ENCODE measurements at regions of chr7 and their contacts with region 1.

Region 1: GRCh38 chr7:134632937-134633540 is 13.6 kb upstream of the BPGM start:
- DNase-seq: peak; percentile 57 to 65 (median 62)
- H3K4me3 ChIP-seq: no peak overlapping the region
- H3K4me3 Mint-ChIP-seq: no peak overlapping the region
- H3K27ac ChIP-seq: no peak overlapping the region
- H3K27ac Mint-ChIP-seq: peak overlapping the region in 1 of 7 donors; percentile 19
- H3K4me1 ChIP-seq: peaks cover 17% of the 10 kb centered on the region
- H3K4me1 Mint-ChIP-seq: peaks cover 13 to 18% (median 16%) of the 10 kb centered on the region in 4 donors
- H3K27me3 ChIP-seq: no peaks in the 10 kb centered on the region
- H3K27me3 Mint-ChIP-seq: peaks cover 9 to 12% of the 10 kb centered on the region in 2 donors

Region 2: GRCh38 chr7:134669845-134670373 is 36.9 kb after region 1 on chr7:
- CTCF ChIA-PET with region 1: interaction called, 5 read pairs
- POLR2A ChIA-PET with region 1: no interaction called
- intact Hi-C with region 1: loop called (anchors 5 kb)
- DNase-seq: peak; percentile 84 to 94 (median 85)
- H3K4me3 ChIP-seq: peak overlapping the region in 1 of 2 donors; percentile 4
- H3K4me3 Mint-ChIP-seq: peak overlapping the region; percentile 74 to 87 (median 78)
- H3K27ac ChIP-seq: peak overlapping the region; percentile 48
- H3K27ac Mint-ChIP-seq: peak overlapping the region; percentile 91 to 100 (median 98)
- H3K4me1 ChIP-seq: peaks cover 33% of the 10 kb centered on the region
- H3K4me1 Mint-ChIP-seq: peaks cover 26 to 46% (median 37%) of the 10 kb centered on the region in 4 donors
- H3K27me3 ChIP-seq: no peaks in the 10 kb centered on the region
- H3K27me3 Mint-ChIP-seq: no peaks in the 10 kb centered on the region

Region 3: DNA sequence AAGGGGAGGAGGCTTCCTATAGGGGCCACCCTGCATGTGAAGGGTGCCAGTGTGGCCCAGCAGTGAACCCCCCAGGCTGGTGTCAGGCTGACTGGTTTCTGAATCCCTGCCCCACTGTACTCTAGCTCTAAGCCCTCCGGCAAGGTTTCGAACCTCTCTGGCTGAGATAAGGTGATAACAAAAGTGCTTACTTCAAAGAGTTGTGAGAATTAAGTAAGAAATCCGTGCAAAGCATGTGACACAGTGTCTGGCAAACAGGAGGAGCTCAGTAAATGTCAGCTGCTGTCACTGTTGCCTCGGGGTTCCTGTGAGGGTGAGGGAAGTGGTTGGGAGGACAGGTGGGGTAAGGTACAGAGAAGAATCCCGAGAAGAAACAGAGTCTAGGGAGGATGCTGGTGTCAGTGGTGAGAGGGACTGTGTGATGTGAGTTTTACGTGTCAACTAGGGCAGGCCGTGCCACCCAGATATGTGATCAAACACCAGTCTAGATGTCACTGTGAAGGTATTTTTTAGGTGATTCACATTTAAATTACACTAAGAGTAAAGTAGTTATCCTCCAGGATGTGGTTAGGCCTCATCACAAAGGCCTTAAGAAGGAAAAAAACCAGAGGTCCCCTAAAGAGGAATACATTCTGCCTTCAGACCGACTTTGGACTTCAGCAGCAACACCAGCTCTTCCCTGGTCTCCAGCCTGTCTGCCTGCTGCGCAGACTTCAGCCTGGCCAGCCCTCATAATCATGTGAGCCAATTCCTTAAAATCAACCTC is 78.0 kb after region 1 on chr7:
- CTCF ChIA-PET with region 1: interaction called, 11 read pairs
- POLR2A ChIA-PET with region 1: no interaction called
- intact Hi-C with region 1: no loop called
- DNase-seq: peak; percentile 70 to 92 (median 80)
- H3K4me3 ChIP-seq: no peak overlapping the region
- H3K4me3 Mint-ChIP-seq: peak overlapping the region in 7 of 8 donors; percentile 57 to 78 (median 66)
- H3K27ac ChIP-seq: peak overlapping the region; percentile 45
- H3K27ac Mint-ChIP-seq: peak overlapping the region; percentile 87 to 99 (median 96)
- H3K4me1 ChIP-seq: peaks cover 17% of the 10 kb centered on the region
- H3K4me1 Mint-ChIP-seq: peaks cover 10 to 22% (median 18%) of the 10 kb centered on the region in 4 donors
- H3K27me3 ChIP-seq: no peaks in the 10 kb centered on the region
- H3K27me3 Mint-ChIP-seq: no peaks in the 10 kb centered on the region

Region 4: GRCh38 chr7:134755401-134756022 is 122.5 kb after region 1 on chr7:
- CTCF ChIA-PET with region 1: interaction called, 175 read pairs
- POLR2A ChIA-PET with region 1: no interaction called
- intact Hi-C with region 1: loop called (anchors 1 kb)
- DNase-seq: peak; percentile 6 to 43 (median 13)
- H3K4me3 ChIP-seq: no peak overlapping the region
- H3K4me3 Mint-ChIP-seq: no peak overlapping the region
- H3K27ac ChIP-seq: no peak overlapping the region
- H3K27ac Mint-ChIP-seq: no peak overlapping the region
- H3K4me1 ChIP-seq: no peaks in the 10 kb centered on the region
- H3K4me1 Mint-ChIP-seq: no peaks in the 10 kb centered on the region
- H3K27me3 ChIP-seq: no peaks in the 10 kb centered on the region
- H3K27me3 Mint-ChIP-seq: no peaks in the 10 kb centered on the region

Region 5: DNA sequence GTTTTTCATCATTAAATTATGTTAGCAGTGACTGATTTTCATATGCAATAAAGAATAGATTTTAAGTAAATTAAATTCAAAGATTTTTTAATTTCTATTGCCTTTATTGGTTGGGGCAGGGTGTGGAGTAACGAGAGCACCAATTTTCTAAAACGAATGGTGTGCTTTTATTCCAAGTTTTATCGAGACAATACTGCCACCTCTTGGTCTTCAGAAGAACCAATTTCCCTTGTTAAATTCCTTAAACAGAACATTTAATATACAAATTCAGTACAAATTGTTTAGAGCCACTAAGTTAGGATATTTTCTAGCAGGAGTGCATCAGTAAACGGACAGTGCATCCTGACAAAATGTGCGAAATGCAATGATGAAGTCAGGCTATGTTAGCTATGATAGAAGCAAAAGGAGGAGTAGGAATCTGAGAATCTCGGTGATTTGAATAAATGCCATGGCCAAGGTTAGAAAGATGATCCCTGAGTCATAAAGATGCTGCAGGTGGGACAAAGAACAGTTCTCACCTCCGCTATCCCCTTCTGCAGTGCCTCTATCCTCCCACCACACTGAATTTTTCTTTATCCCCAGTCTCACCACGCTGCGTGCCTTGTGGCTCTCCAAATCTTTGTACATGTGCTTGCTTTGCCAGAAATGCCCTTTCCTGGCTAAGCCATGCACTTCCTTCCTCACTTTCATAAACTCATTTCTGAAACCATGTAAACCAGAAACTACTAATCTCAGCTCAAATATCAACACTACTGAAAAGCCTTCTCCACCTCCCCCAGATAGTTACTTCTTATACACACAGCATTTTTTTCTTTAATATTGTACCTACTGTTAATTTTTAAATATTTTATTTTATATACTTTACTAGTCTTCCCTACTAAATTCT is 321.4 kb after region 1 on chr7:
- CTCF ChIA-PET with region 1: interaction called, 40 read pairs
- POLR2A ChIA-PET with region 1: no interaction called
- intact Hi-C with region 1: loop called (anchors 1 kb)
- DNase-seq: peak in 4 of 5 donors; percentile 24 to 39 (median 30)
- H3K4me3 ChIP-seq: no peak overlapping the region
- H3K4me3 Mint-ChIP-seq: no peak overlapping the region
- H3K27ac ChIP-seq: no peak overlapping the region
- H3K27ac Mint-ChIP-seq: peak overlapping the region in 1 of 7 donors; percentile 40
- H3K4me1 ChIP-seq: no peaks in the 10 kb centered on the region
- H3K4me1 Mint-ChIP-seq: no peaks in the 10 kb centered on the region
- H3K27me3 ChIP-seq: no peaks in the 10 kb centered on the region
- H3K27me3 Mint-ChIP-seq: no peaks in the 10 kb centered on the region

Region 6: DNA sequence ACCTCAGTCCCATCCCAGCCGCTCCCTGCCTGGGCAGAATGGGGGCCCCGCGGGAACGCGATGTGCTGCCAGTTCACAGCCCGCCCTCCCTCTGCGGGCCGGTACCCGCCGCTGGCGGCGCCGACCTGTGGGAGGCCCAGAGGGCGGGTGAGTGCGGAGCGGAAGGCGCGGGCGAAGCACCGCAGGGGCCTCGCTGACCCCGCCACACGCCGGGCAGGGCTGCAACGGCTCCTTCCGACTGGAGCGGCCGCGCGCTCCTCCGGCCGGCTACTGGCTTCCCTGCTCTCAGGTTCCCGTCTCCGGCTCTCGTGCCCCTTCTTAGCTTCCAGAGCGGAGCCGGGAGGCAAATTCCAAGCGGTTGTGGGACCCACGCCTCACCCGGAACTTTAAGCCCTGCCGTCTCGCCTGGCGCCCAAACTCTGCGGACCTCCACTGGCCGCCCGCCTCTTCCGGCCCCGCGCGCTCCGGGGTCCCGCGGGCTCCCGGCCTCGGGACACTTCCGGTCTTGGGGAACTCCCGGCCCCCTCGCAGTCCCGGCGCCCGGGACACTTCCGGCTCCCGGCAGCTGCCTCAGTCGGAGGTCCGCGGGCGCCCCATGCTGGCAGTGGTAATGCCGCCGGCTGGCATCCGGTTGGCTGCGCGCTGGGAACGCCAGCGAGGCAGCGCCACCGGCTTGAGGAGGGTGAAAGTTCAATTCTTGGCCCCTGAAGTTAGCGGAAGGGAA is 537.4 kb after region 1 on chr7 and contains the start of gene CYREN:
- CTCF ChIA-PET with region 1: interaction called, 13 read pairs
- POLR2A ChIA-PET with region 1: interaction called, 3 read pairs
- intact Hi-C with region 1: loop called (anchors 1 kb)
- DNase-seq: peak; percentile 79 to 88 (median 84)
- H3K4me3 ChIP-seq: peak within 1 kb of the TSS; percentile 19 to 79
- H3K4me3 Mint-ChIP-seq: peak within 1 kb of the TSS; percentile 89 to 95 (median 90)
- H3K27ac ChIP-seq: peak within 1 kb of the TSS; percentile 93
- H3K27ac Mint-ChIP-seq: peak within 1 kb of the TSS; percentile 94 to 97 (median 97)
- H3K4me1 ChIP-seq: peaks cover 43% of the 10 kb centered on the region
- H3K4me1 Mint-ChIP-seq: peaks cover 35 to 57% (median 45%) of the 10 kb centered on the region in 4 donors
- H3K27me3 ChIP-seq: no peaks in the 10 kb centered on the region
- H3K27me3 Mint-ChIP-seq: no peaks in the 10 kb centered on the region
- total RNA-seq, gene CYREN: 45.3 to 46.5 TPM